Activated naive CD4-positive, alpha-beta T cell treated with anti-CD3 and anti-CD28 coated beads for 36 hours (primary cell): ENCODE measurements at regions of chr3 and their contacts with region 1.

Region 1: GRCh38 chr3:52231502-52232293 is 6.3 kb upstream of the TLR9 start:
- DNase-seq: peak; percentile 89
- H3K4me3 Mint-ChIP-seq: no peak overlapping the region
- H3K27ac Mint-ChIP-seq: peak overlapping the region; percentile 88
- H3K4me1 Mint-ChIP-seq: peaks cover 45% of the 10 kb centered on the region
- H3K27me3 Mint-ChIP-seq: no peaks in the 10 kb centered on the region

Region 2: GRCh38 chr3:52245322-52246263 is 13.9 kb after region 1 on chr3 and contains the start of gene PPM1M:
- CTCF ChIA-PET with region 1: interaction called, 49 read pairs
- intact Hi-C with region 1: no loop called
- DNase-seq: peak; percentile 54
- H3K4me3 Mint-ChIP-seq: peak within 1 kb of the TSS; percentile 79
- H3K27ac Mint-ChIP-seq: peak within 1 kb of the TSS; percentile 90
- H3K4me1 Mint-ChIP-seq: peaks cover 81% of the 10 kb centered on the region
- H3K27me3 Mint-ChIP-seq: no peaks in the 10 kb centered on the region
- total RNA-seq, gene PPM1M: 107 to 108 TPM

Region 3: DNA sequence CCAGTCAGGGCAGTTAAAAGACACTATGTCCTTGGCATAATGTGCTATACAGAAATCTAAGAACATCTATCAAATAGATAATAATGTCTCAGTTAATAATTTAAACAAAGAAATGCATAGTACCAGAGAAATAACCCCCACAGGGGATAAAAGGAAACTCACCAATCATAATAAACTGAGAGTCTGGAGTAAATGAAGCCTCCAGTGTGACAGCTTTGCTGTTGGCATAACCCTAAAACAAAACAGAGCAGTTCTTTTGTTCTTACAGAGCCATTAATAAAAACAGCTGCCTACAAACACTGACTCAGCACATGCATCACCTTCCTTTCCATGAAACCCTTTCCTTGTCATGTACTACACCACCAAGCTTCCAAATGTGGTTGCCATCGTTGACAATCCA is 27.3 kb after region 1 on chr3:
- CTCF ChIA-PET with region 1: interaction called, 49 read pairs
- intact Hi-C with region 1: no loop called
- DNase-seq: no peak
- H3K4me3 Mint-ChIP-seq: no peak overlapping the region
- H3K27ac Mint-ChIP-seq: peak overlapping the region; percentile 62
- H3K4me1 Mint-ChIP-seq: peaks cover 95% of the 10 kb centered on the region
- H3K27me3 Mint-ChIP-seq: no peaks in the 10 kb centered on the region

Region 4: DNA sequence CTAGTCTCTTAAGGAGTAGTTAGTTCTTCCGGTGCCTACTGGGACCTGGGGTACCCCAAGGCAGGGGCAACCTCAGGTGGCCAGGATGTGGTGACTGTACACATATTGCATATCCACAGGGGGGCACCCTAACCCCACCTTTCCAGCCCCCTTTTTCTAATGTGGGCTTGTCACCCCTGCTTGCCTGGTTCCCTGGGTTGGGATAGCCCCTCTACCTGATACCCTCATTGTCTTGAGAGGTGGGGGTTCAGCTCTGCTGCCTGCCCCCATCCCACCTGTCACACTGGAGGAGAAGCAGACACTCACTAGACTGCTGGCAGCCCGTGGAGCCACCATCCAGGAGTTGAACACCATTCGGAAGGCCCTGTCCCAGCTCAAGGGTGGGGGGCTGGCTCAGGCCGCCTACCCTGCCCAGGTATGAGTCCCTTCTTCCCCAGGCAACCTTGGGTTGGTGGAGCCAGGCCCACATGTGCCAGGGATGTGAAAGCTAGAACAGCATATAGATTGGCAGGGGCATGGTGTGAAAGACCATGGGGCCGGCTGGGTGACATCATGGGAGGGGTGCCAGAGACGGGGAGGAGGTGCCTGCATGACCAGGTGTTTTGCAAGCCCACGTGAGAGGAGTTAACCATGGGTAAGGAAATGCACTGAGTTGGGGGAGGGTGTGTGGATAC is 59.9 kb after region 1 on chr3:
- CTCF ChIA-PET with region 1: interaction called, 17 read pairs
- intact Hi-C with region 1: no loop called
- DNase-seq: peak; percentile 51
- H3K4me3 Mint-ChIP-seq: no peak overlapping the region
- H3K27ac Mint-ChIP-seq: no peak overlapping the region
- H3K4me1 Mint-ChIP-seq: peaks cover 24% of the 10 kb centered on the region
- H3K27me3 Mint-ChIP-seq: no peaks in the 10 kb centered on the region

Region 5: DNA sequence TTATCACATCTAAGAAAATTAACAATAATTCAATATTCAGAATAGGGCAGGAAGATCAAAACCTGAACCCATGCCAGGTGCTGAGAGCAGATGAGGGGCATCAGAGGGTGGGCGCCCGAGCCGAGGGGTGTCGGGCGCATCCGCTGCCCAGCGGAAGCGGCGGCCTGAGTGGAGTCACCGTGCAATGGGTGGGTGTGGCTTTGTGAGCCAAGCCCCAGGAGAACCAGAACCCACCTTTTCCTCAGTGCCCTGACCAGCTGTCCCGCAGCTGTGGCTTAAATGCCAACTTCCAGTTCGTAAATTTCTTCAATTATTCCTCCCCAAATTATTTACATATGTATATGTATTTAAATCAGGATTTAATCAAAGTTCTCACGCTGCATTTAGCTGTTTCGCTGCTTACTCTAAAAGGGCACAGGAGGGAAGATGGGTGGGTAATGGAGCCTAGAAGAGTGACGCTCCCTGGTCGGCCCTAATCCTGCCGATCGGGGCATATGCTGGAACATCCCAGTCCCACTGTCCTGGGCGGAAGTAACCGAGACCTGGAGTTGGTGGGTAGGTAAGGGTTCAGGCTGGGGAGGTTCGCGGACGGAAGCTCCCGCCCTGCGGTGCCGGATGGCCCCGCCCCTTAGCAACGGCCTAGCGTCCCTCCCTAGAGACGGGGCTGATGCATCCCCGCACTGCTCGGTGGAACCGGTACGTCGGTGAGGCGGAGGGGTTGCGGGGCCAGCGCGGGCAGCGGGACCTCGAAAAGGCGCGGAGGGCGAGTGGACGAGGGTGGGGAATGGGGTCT is 85.7 kb after region 1 on chr3:
- CTCF ChIA-PET with region 1: interaction called, 10 read pairs
- intact Hi-C with region 1: no loop called
- DNase-seq: peak; percentile 77
- H3K4me3 Mint-ChIP-seq: peak overlapping the region; percentile 58
- H3K27ac Mint-ChIP-seq: no peak overlapping the region
- H3K4me1 Mint-ChIP-seq: peaks cover 20% of the 10 kb centered on the region
- H3K27me3 Mint-ChIP-seq: no peaks in the 10 kb centered on the region